ENCODE measurements at regions of chr13 and their contacts with region 1.

Region 1: GRCh38 chr13:44017756-44018309 is 138.1 kb downstream of the LACC1 start:
- DNase-seq: no peak
- ATAC-seq: no peak
- H3K4me3 ChIP-seq: no peak overlapping the region
- H3K27ac ChIP-seq: peak overlapping the region in 1 of 4 donors; percentile 6
- H3K4me1 ChIP-seq: peaks cover 17 to 31% of the 10 kb centered on the region in 2 donors
- H3K27me3 ChIP-seq: no peaks in the 10 kb centered on the region
- CTCF ChIP-seq: no peak
- POLR2A ChIP-seq: no peak

Region 2: DNA sequence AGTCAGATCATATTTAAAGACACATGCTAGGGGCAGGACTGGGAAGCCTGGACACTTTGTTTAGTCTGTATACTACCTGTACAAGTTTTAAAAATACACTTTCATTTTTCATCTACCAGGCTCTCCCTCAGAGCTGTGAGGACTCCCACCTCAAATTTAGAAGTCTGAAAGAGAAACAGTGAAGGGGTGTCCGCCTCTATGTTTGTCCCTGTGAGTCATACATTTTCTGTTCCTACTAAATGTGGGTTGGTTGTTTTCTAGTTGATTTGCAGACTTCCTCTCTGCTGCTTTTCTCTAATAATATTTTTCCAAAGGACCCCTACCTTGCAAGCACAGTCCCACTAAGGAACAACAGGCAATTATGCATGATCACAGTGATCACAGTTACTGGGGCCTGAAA is 341.5 kb before region 1 on chr13:
- in situ Hi-C with region 1: no loop called
- intact Hi-C with region 1: no loop called
- DNase-seq: no peak
- ATAC-seq: no peak
- H3K4me3 ChIP-seq: no peak overlapping the region
- H3K27ac ChIP-seq: no peak overlapping the region
- H3K4me1 ChIP-seq: no peaks in the 10 kb centered on the region
- H3K27me3 ChIP-seq: no peaks in the 10 kb centered on the region
- CTCF ChIP-seq: no peak
- POLR2A ChIP-seq: no peak

Region 3: GRCh38 chr13:43981091-43981490 is 36.7 kb before region 1 on chr13:
- in situ Hi-C with region 1: no loop called
- intact Hi-C with region 1: loop called (anchors 5 kb)
- DNase-seq: no peak
- ATAC-seq: no peak
- H3K4me3 ChIP-seq: no peak overlapping the region
- H3K27ac ChIP-seq: no peak overlapping the region
- H3K4me1 ChIP-seq: peaks cover 9 to 11% of the 10 kb centered on the region in 2 donors
- H3K27me3 ChIP-seq: no peaks in the 10 kb centered on the region
- CTCF ChIP-seq: no peak
- POLR2A ChIP-seq: no peak

Region 4: DNA sequence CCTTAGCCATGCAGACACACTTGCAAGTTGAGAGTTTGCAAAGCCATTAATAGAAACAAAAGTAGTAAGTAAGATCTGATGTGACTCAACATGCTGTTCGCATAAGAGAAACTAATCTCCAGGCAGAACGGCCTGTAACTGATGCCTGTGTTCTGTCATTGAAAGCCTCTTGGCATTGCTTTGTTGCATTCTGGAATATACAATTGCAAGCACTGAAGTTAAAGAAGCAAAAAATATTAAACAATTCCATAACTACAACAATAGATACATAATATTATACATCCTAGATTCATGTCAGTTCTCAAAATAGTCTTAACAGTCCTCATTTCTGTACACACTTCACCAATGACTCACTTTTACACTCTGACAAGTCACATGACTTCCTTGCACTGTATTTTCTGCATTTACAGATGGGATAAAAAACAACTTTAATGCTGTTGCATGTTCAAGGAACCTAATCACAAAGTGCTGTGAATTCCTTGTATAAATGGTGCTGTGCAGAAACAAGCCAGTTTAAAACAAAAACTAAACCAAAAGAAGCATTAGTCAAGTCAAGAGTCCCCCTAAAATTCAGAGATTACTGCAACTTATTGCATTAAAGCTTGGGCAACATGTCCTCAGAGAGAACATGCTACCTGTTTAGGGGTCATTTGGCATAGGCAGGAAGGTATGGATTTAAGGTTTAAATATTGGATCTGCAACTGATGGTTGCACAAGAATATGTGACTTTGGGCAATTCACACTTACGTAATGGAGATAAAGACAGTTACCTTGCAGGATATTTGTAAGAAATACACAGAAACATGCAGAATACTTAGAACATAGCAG is 276.3 kb after region 1 on chr13:
- in situ Hi-C with region 1: no loop called
- intact Hi-C with region 1: no loop called
- DNase-seq: no peak
- ATAC-seq: peak; percentile 91 to 95
- H3K4me3 ChIP-seq: no peak overlapping the region
- H3K27ac ChIP-seq: peak overlapping the region; percentile 61 to 80 (median 68)
- H3K4me1 ChIP-seq: peaks cover 44 to 49% of the 10 kb centered on the region in 2 donors
- H3K27me3 ChIP-seq: no peaks in the 10 kb centered on the region
- CTCF ChIP-seq: no peak
- POLR2A ChIP-seq: no peak